ENCODE measurements at regions of chr1 and their contacts with region 1.

Region 1: DNA sequence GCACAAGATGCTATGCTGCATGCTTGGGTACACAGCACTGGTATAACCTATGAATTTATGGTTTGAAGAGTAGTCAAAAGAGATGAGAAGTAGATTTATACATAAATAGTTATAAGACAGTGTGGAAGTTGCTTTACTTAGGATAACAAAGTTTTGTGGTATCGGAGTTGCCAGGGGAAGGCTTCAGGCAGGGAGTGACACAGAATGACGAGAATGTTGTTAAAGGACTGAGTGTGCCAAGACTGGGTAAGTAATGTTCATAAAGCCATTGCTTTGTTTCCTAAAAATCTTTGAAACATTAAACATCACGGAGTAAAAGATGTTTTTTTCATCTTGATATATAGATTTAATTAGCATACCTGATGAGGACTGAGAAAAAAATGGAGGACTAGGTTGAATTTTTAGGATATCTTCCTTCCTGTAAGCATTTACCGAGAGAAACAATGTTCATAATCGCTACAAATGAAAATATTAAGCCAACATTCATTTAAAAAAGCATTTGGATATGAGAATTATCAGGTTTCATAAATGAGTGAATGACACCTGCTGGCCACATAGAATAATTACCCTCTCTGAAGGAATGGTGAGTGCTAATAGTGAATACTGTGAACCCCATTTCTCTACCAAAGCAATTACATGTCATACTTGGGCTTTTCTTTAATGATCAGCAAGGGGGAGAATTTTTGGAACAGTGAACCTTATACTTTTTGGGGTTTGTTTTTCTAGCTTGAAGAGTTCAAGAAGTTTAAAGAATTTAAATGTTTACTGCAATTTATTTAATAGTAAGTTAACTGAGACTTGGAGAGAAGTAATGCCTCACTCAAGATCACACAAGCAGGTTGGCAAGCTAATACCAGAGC is 28.4 kb downstream of the EXTL2 start:
- DNase-seq: no peak
- H3K4me3 ChIP-seq: peak overlapping the region in 1 of 2 donors; percentile 41
- H3K27ac ChIP-seq: no peak overlapping the region
- H3K4me1 ChIP-seq: no peaks in the 10 kb centered on the region
- H3K27me3 ChIP-seq: no peaks in the 10 kb centered on the region
- CTCF ChIP-seq: peak; percentile 50 to 68 (median 63)

Region 2: DNA sequence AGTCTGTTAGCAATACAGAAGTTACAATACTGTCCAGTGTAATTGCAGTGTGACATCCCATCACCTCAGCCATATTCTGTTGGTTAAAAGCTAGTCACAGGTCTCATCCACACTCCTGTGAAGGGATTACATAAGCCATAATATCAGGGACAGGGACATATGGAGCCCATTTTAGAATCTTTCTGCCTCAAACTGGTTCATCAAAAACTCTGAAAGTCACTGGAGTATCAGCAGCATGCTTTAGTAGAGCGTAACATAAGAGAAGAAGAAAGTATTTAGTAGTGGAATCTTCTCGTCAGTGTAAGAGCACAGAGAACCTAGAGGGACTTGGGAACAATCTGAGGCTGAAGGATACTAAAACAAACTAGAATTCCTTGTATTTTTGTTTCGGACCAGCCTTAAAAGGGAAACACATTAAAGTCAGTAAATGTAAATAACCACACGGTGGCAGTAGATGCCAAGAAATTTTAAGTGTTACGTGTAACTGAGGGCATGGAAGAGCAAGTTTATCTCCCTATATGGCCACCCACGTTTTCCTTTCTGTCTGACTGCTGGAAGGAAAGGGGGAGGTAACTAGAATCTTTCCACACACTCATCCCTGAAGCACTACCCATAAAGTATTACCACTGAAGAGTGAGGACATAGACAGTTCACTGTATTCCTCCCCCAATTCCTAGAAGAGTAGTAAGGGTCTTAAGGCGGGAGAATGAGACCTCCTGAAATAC is 1057.7 kb before region 1 on chr1:
- intact Hi-C with region 1: loop called (anchors 5 kb)
- DNase-seq: peak in 1 of 2 donors; percentile 62
- H3K4me3 ChIP-seq: peak overlapping the region in 1 of 2 donors; percentile 52
- H3K27ac ChIP-seq: no peak overlapping the region
- H3K4me1 ChIP-seq: peaks cover 0 to 3% of the 10 kb centered on the region in 2 donors
- H3K27me3 ChIP-seq: no peaks in the 10 kb centered on the region
- CTCF ChIP-seq: peak; percentile 54 to 64 (median 63)

Region 3: DNA sequence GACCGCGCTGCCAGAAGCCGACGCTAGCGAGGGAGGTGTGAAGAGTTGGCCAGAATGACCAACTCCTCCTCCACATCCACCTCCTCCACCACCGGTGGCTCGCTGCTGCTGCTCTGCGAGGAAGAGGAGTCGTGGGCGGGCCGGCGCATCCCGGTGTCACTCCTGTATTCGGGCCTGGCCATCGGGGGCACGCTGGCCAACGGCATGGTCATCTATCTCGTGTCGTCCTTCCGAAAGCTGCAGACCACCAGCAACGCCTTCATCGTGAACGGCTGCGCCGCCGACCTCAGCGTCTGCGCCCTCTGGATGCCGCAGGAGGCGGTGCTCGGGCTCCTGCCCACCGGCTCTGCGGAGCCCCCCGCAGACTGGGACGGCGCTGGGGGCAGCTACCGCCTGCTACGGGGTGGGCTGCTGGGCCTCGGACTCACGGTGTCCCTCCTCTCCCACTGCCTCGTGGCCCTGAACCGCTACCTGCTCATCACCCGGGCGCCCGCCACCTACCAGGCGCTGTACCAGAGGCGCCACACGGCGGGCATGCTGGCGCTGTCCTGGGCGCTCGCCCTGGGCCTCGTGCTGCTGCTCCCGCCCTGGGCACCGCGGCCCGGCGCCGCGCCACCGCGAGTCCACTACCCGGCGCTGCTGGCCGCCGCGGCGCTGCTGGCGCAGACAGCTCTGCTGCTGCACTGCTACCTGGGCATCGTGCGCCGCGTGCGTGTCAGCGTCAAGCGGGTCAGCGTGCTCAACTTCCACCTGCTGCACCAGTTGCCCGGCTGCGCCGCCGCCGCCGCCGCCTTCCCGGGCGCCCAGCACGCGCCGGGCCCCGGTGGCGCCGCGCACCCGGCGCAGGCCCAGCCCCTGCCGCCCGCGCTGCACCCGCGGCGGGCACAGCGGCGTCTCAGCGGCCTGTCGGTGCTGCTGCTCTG is 327.1 kb before region 1 on chr1:
- intact Hi-C with region 1: no loop called
- DNase-seq: no peak
- H3K4me3 ChIP-seq: peak overlapping the region; percentile 60 to 61
- H3K27ac ChIP-seq: no peak overlapping the region
- H3K4me1 ChIP-seq: peaks cover 4 to 11% of the 10 kb centered on the region in 2 donors
- H3K27me3 ChIP-seq: no peaks in the 10 kb centered on the region
- CTCF ChIP-seq: no peak

Region 4: DNA sequence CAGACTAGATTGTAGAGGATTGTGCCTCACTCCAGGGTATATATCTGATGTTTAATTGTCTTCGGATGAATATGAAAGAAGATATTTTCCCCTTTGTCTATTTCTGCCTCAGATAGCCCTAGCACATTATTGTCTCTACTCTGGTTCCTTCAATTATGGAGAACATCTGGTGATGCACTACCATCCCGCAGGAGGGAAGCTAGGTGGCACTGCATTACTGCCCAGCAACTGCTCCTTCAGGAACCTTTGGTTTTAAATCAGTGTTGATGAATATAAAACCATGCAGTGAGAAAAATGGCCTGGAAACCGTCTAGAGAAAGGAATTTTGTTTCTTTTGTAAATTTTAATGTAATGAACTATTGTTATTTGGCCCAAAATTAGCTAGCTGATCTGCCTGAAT is 259.8 kb before region 1 on chr1:
- intact Hi-C with region 1: loop called (anchors 1 kb)
- DNase-seq: peak in 1 of 2 donors; percentile 76
- H3K4me3 ChIP-seq: no peak overlapping the region
- H3K27ac ChIP-seq: no peak overlapping the region
- H3K4me1 ChIP-seq: peaks cover 0 to 14% of the 10 kb centered on the region in 2 donors
- H3K27me3 ChIP-seq: no peaks in the 10 kb centered on the region
- CTCF ChIP-seq: peak; percentile 61 to 87 (median 71)

Region 5: DNA sequence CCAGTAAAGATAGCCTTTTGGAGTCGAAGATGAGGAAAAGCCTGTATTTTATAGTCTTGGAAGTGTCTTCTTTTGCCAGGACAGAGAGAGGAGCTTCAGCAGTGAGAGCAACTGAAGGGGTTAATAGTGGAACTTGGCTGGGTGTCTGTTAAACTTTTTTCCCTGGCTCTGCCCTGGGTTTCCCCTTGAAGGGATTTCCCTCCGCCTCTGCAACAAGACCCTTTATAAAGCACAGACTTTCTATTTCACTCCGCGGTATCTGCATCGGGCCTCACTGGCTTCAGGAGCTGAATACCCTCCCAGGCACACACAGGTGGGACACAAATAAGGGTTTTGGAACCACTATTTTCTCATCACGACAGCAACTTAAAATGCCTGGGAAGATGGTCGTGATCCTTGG is 146.8 kb before region 1 on chr1 and contains the start of gene VCAM1:
- intact Hi-C with region 1: loop called (anchors 10 kb)
- DNase-seq: no peak
- H3K4me3 ChIP-seq: peak within 1 kb of the TSS; percentile 41 to 46
- H3K27ac ChIP-seq: peak within 1 kb of the TSS in 1 of 2 donors; percentile 17
- H3K4me1 ChIP-seq: no peaks in the 10 kb centered on the region
- H3K27me3 ChIP-seq: no peaks in the 10 kb centered on the region
- CTCF ChIP-seq: no peak
- total RNA-seq, gene VCAM1: 9.8 TPM